GM12878 (cell line): ENCODE measurements at regions of chr4 and their contacts with region 1.

Region 1: GRCh38 chr4:12633053-12633651 is 851.0 kb downstream of the RAB28 start:
- DNase-seq: peak; percentile 26
- ATAC-seq: peak; percentile 97
- H3K4me3 ChIP-seq: no peak overlapping the region
- H3K27ac ChIP-seq: no peak overlapping the region
- H3K4me1 ChIP-seq: no peaks in the 10 kb centered on the region
- H3K27me3 ChIP-seq: no peaks in the 10 kb centered on the region
- CTCF ChIP-seq: peak; percentile 85 to 92 (median 85)
- EP300 ChIP-seq: no peak
- POLR2A ChIP-seq: no peak
- RAD21 ChIP-seq: peak; percentile 94

Region 2: DNA sequence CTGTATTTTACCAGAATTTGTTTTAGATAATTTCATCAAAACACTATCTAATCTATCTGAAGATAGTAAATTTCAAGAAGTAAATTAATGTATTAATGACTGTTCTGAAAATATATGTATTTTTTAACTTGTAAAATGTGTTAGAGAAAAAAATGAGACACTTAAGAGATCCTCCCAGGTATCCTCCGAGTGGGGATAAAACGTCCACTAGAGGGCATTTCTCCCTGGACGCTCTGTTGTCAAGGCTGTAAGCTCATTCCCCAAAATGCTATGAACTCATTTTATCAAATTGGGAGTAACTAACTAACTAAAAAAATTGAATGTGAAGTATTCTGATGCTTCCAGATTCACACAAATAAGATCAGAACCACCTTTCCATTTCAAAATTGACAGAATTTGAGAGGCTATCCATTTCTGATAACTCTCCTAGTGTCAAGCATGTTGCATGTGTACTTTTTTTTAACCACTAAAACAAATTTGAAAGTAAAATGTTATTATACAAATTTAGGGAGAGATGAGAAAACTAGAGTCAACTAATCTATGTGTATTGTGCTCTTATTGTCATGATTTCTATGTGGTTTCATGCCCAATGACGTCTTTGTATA is 867.2 kb before region 1 on chr4:
- CTCF ChIA-PET with region 1: interaction called, 5 read pairs
- POLR2A ChIA-PET with region 1: no interaction called
- RAD21 ChIA-PET with region 1: interaction called, 6 read pairs
- SMC1A ChIA-PET with region 1: interaction called, 3 read pairs
- in situ Hi-C with region 1: loop called (anchors 25 kb)
- intact Hi-C with region 1: loop called (anchors 1 kb)
- DNase-seq: no peak
- ATAC-seq: peak; percentile 76
- H3K4me3 ChIP-seq: no peak overlapping the region
- H3K27ac ChIP-seq: no peak overlapping the region
- H3K4me1 ChIP-seq: no peaks in the 10 kb centered on the region
- H3K27me3 ChIP-seq: no peaks in the 10 kb centered on the region
- CTCF ChIP-seq: peak; percentile 54 to 70 (median 65)
- EP300 ChIP-seq: no peak
- POLR2A ChIP-seq: no peak
- RAD21 ChIP-seq: peak; percentile 40; the same call in 1 of the 2 replicates

Region 3: GRCh38 chr4:11805842-11806241 is 827.3 kb before region 1 on chr4:
- CTCF ChIA-PET with region 1: no interaction called
- POLR2A ChIA-PET with region 1: no interaction called
- RAD21 ChIA-PET with region 1: no interaction called
- SMC1A ChIA-PET with region 1: interaction called, 4 read pairs
- in situ Hi-C with region 1: no loop called
- intact Hi-C with region 1: loop called (anchors 1 kb)
- DNase-seq: no peak
- ATAC-seq: peak; percentile 51
- H3K4me3 ChIP-seq: no peak overlapping the region
- H3K27ac ChIP-seq: no peak overlapping the region
- H3K4me1 ChIP-seq: no peaks in the 10 kb centered on the region
- H3K27me3 ChIP-seq: no peaks in the 10 kb centered on the region
- CTCF ChIP-seq: peak; percentile 21 to 28 (median 23); a peak in 3 of 6 replicates
- EP300 ChIP-seq: no peak
- POLR2A ChIP-seq: no peak
- RAD21 ChIP-seq: 0 out of 2 replicates have a peak, but pooled peaks have one; percentile 21

Region 4: GRCh38 chr4:12178614-12179610 is 454.2 kb before region 1 on chr4:
- CTCF ChIA-PET with region 1: no interaction called
- POLR2A ChIA-PET with region 1: no interaction called
- RAD21 ChIA-PET with region 1: no interaction called
- SMC1A ChIA-PET with region 1: no interaction called
- in situ Hi-C with region 1: no loop called
- intact Hi-C with region 1: no loop called
- DNase-seq: no peak
- ATAC-seq: no peak
- H3K4me3 ChIP-seq: no peak overlapping the region
- H3K27ac ChIP-seq: no peak overlapping the region
- H3K4me1 ChIP-seq: no peaks in the 10 kb centered on the region
- H3K27me3 ChIP-seq: no peaks in the 10 kb centered on the region
- CTCF ChIP-seq: no peak
- EP300 ChIP-seq: no peak
- POLR2A ChIP-seq: no peak
- RAD21 ChIP-seq: no peak